Adrenal gland (tissue), 19 donors: ENCODE measurements at regions of chr13 and their contacts with region 1.

Region 1: DNA sequence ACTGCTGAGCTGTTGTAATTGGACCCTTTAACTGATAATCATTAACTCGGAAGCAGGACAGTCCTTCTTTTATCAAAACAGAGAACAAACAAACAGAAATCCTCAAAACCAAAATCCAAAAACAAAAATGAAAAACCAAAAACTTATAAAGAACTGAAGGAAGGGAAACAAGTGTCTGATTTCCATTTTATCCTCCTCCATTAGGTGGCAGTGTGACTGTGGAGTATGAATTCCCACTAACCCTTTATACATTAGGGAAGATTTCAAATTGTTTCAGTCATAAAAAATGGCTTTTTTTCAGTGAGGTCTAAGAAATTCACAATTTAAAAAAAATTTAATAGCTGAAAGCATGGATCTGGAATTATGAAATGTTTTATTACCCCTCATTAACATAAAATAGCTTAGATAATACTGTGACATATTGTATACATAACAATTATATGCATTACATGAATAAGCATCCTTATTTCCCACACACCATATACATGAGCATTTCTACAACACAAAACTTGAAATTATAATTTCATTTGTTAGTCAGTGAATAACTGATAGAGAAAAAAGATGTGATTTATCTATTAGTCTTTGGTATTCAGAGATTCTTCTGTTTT is 1074.3 kb upstream of the PCDH9 start:
- DNase-seq: peak in 1 of 7 donors; percentile 7
- H3K4me3 ChIP-seq: no peak overlapping the region
- H3K27ac ChIP-seq: no peak overlapping the region
- H3K4me1 ChIP-seq: no peaks in the 10 kb centered on the region
- H3K27me3 ChIP-seq: no peaks in the 10 kb centered on the region
- CTCF ChIP-seq: peak; percentile 44 to 63 (median 52)
- POLR2A ChIP-seq: no peak

Region 2: GRCh38 chr13:68160466-68160865 is 143.9 kb before region 1 on chr13:
- intact Hi-C with region 1: no loop called
- DNase-seq: no peak
- H3K4me3 ChIP-seq: no peak overlapping the region
- H3K27ac ChIP-seq: no peak overlapping the region
- H3K4me1 ChIP-seq: no peaks in the 10 kb centered on the region
- H3K27me3 ChIP-seq: no peaks in the 10 kb centered on the region
- CTCF ChIP-seq: no peak
- POLR2A ChIP-seq: no peak

Region 3: GRCh38 chr13:68927387-68928026 is 623.1 kb after region 1 on chr13:
- intact Hi-C with region 1: loop called in 1 of 2 experiments (anchors 5 kb)
- DNase-seq: peak in 6 of 7 donors; percentile 10 to 55 (median 20)
- H3K4me3 ChIP-seq: no peak overlapping the region
- H3K27ac ChIP-seq: no peak overlapping the region
- H3K4me1 ChIP-seq: no peaks in the 10 kb centered on the region
- H3K27me3 ChIP-seq: no peaks in the 10 kb centered on the region
- CTCF ChIP-seq: peak; percentile 8 to 46 (median 38)
- POLR2A ChIP-seq: no peak

Region 4: GRCh38 chr13:69524459-69525155 is 1220.2 kb after region 1 on chr13:
- intact Hi-C with region 1: loop called in 1 of 2 experiments (anchors 10 kb)
- DNase-seq: no peak
- H3K4me3 ChIP-seq: no peak overlapping the region
- H3K27ac ChIP-seq: no peak overlapping the region
- H3K4me1 ChIP-seq: no peaks in the 10 kb centered on the region
- H3K27me3 ChIP-seq: no peaks in the 10 kb centered on the region
- CTCF ChIP-seq: peak; percentile 16 to 48 (median 41)
- POLR2A ChIP-seq: no peak